Posterior cingulate gyrus (tissue), 11 donors: ENCODE measurements at regions of chr21 and their contacts with region 1.

Region 1: GRCh38 chr21:33199516-33200217 is 30.1 kb upstream of the IFNAR2 start:
- DNase-seq: peak in 6 of 10 donors; percentile 57 to 86 (median 78)

Region 2: GRCh38 chr21:32834916-32835235 is 364.8 kb before region 1 on chr21:
- intact Hi-C with region 1: loop called (anchors 2 kb)
- DNase-seq: peak in 5 of 10 donors; percentile 7 to 79 (median 19)

Region 3: GRCh38 chr21:32994305-32994704 is 205.4 kb before region 1 on chr21:
- intact Hi-C with region 1: loop called (anchors 2 kb)
- DNase-seq: no peak

Region 4: DNA sequence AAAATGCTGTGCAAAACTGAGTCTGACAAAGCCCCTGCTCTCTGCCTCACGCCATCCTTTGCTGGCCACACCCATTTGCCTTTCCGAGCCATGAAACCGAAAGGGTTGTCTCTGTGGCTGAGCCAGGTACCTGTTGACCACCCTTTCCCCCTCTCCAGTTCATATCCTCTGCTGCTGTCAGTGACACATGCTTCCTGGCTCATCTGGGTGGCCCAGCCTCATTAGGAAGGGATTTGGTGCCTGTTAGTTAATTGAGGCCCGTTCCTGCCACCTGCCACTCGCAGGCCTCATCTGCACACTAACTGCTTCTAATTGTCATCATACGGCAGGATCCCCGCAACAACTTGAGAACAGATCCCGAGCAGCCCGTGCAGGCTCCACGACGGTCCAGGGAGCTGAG is 50.5 kb before region 1 on chr21:
- intact Hi-C with region 1: no loop called
- DNase-seq: no peak

Region 5: GRCh38 chr21:33360881-33361602 is 161.4 kb after region 1 on chr21:
- intact Hi-C with region 1: loop called (anchors 1 kb)
- DNase-seq: peak; percentile 42 to 94 (median 76)

Region 6: GRCh38 chr21:33441489-33442477 is 242.1 kb after region 1 on chr21:
- intact Hi-C with region 1: loop called (anchors 1 kb)
- DNase-seq: no peak